ENCODE measurements at regions of chr16 and their contacts with region 1.

Region 1: GRCh38 chr16:83971165-83972130 is 3.4 kb downstream of the NECAB2 start:
- DNase-seq: no peak
- ATAC-seq: peak; percentile 9
- H3K4me3 ChIP-seq: peak overlapping the region in 1 of 3 experiments; percentile 13; a peak in 1 of 6 replicates
- H3K27ac ChIP-seq: no peak overlapping the region
- H3K4me1 ChIP-seq: peaks cover 17% of the 10 kb centered on the region
- H3K27me3 ChIP-seq: peaks cover 5 to 48% of the 10 kb centered on the region in 2 experiments; a peak in 4 of 5 replicates
- CTCF ChIP-seq: no peak
- EP300 ChIP-seq: no peak
- POLR2A ChIP-seq: no peak
- RAD21 ChIP-seq: no peak

Region 2: GRCh38 chr16:84907575-84907974 is 936.1 kb after region 1 on chr16:
- CTCF ChIA-PET with region 1: no interaction called
- POLR2A ChIA-PET with region 1: no interaction called
- in situ Hi-C with region 1: no loop called
- intact Hi-C with region 1: loop called (anchors 5 kb)
- DNase-seq: no peak
- ATAC-seq: no peak
- H3K4me3 ChIP-seq: no peak overlapping the region
- H3K27ac ChIP-seq: no peak overlapping the region
- H3K4me1 ChIP-seq: peaks cover 9% of the 10 kb centered on the region
- H3K27me3 ChIP-seq: peaks cover 2 to 40% of the 10 kb centered on the region in 2 experiments; a peak in 4 of 5 replicates
- CTCF ChIP-seq: no peak
- EP300 ChIP-seq: no peak
- POLR2A ChIP-seq: no peak
- RAD21 ChIP-seq: no peak

Measured in HepG2 (cell line).